Ovary (tissue), 10 donors: ENCODE measurements at regions of chr16 and their contacts with region 1.

Region 1: GRCh38 chr16:10937068-10937859 is 5.0 kb downstream of the DEXI start:
- DNase-seq: no peak
- H3K4me3 ChIP-seq: no peak overlapping the region
- H3K27ac ChIP-seq: peak overlapping the region in 1 of 2 donors; percentile 0
- H3K4me1 ChIP-seq: peaks cover 19% of the 10 kb centered on the region
- H3K27me3 ChIP-seq: no peaks in the 10 kb centered on the region
- CTCF ChIP-seq: no peak
- EP300 ChIP-seq: no peak
- POLR2A ChIP-seq: no peak

Region 2: GRCh38 chr16:9351440-9351839 is 1585.8 kb before region 1 on chr16:
- intact Hi-C with region 1: no loop called
- DNase-seq: no peak
- H3K4me3 ChIP-seq: no peak overlapping the region
- H3K27ac ChIP-seq: no peak overlapping the region
- H3K4me1 ChIP-seq: no peaks in the 10 kb centered on the region
- H3K27me3 ChIP-seq: no peaks in the 10 kb centered on the region
- CTCF ChIP-seq: no peak
- EP300 ChIP-seq: no peak
- POLR2A ChIP-seq: no peak

Region 3: GRCh38 chr16:10752843-10753523 is 184.3 kb before region 1 on chr16:
- intact Hi-C with region 1: loop called in 1 of 4 experiments (anchors 10 kb)
- DNase-seq: peak in 2 of 5 donors; percentile 32 to 33
- H3K4me3 ChIP-seq: no peak overlapping the region
- H3K27ac ChIP-seq: no peak overlapping the region
- H3K4me1 ChIP-seq: no peaks in the 10 kb centered on the region
- H3K27me3 ChIP-seq: no peaks in the 10 kb centered on the region
- CTCF ChIP-seq: no peak
- EP300 ChIP-seq: no peak
- POLR2A ChIP-seq: no peak

Region 4: DNA sequence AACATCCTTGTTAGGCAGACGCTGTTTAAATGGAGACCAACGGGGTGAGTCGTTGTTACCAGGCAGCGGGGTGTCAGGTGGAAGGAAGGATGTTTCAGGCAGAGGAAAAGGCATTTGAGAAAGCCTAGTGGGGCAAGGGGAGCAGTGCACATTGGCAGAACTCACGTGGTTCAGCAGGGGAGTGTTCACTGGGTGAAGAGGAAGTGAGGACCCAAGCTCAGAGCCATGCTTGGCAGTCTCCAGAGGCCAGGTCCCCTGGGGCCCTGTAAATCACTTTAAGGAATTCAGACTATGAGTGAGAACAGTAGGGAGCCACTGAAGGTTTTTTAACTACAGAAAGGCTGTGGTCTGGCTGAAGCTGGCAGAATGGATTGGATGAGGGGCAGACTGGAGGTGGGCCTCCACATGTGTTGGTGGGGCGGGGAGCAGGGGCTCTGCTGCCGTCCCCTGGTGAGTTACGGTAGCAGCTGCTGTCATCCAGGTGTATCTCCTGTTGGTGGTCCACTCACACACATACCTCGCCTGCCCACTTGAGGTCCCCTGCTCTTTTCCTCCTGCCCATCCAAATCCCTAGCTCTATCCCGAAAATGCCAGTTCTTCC is 12.2 kb after region 1 on chr16:
- intact Hi-C with region 1: no loop called
- DNase-seq: no peak
- H3K4me3 ChIP-seq: no peak overlapping the region
- H3K27ac ChIP-seq: no peak overlapping the region
- H3K4me1 ChIP-seq: peaks cover 6% of the 10 kb centered on the region
- H3K27me3 ChIP-seq: no peaks in the 10 kb centered on the region
- CTCF ChIP-seq: no peak
- EP300 ChIP-seq: no peak
- POLR2A ChIP-seq: no peak

Region 5: GRCh38 chr16:11076259-11077018 is 139.2 kb after region 1 on chr16:
- intact Hi-C with region 1: no loop called
- DNase-seq: no peak
- H3K4me3 ChIP-seq: no peak overlapping the region
- H3K27ac ChIP-seq: no peak overlapping the region
- H3K4me1 ChIP-seq: peaks cover 21% of the 10 kb centered on the region
- H3K27me3 ChIP-seq: no peaks in the 10 kb centered on the region
- CTCF ChIP-seq: no peak
- EP300 ChIP-seq: no peak
- POLR2A ChIP-seq: no peak